Right ventricle myocardium inferior (tissue), 1 donor: ENCODE measurements at regions of chr1 and their contacts with region 1.

Region 1: DNA sequence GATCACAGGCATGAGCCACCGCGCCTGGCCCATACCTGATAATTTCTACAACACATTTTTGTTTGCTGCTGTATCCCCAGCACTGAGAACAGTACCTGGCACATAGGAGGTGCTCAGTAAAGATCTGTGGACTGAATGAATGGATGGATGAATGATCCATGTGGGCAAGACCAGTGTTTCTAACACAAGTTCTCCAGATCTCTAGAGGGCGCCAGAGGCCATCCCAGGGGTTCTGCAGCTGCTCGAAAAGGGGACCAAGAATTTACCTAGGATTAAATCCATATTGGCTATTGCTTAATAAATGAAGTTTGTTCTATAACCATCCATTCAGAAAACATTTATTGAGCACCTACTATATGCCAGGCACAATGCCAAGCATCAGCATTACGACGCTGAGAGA is 167.7 kb downstream of the ACTL8 start:
- DNase-seq: no peak
- ATAC-seq: no peak

Region 2: GRCh38 chr1:18100491-18101063 is 177.7 kb after region 1 on chr1:
- intact Hi-C with region 1: loop called (anchors 5 kb)
- DNase-seq: no peak
- ATAC-seq: peak; percentile 59

Region 3: DNA sequence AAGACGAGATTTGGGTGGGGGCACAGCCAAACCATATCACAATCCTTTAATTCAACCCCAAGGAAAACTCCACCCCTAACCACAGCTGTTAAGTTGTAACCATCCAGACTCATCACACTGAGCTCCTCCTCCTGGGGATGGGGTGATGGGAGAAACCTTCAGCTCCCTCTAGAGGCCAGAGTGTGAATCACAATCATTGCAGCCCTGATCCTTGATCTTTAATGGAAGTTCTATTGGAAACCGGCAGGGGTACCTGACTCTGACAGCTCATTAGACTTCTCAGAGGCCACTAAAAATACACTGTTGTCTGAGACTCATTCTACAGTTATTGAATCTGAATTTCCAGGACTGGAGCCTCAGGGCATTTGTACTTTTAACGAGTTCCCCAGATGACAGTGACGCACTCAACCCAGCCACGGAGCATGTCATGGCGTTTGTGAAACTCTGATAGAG is 312.0 kb after region 1 on chr1:
- intact Hi-C with region 1: loop called (anchors 10 kb)
- DNase-seq: no peak
- ATAC-seq: no peak